ENCODE measurements at regions of chr1 and their contacts with region 1.

Region 1: GRCh38 chr1:169466259-169467230 is 19.2 kb downstream of the SLC19A2 start:
- DNase-seq: no peak
- ATAC-seq: peak in 1 of 2 donors; percentile 33
- H3K4me3 ChIP-seq: no peak overlapping the region
- H3K27ac ChIP-seq: no peak overlapping the region
- H3K4me1 ChIP-seq: no peaks in the 10 kb centered on the region
- H3K27me3 ChIP-seq: no peaks in the 10 kb centered on the region
- CTCF ChIP-seq: peak; percentile 33

Region 2: GRCh38 chr1:169546087-169546995 is 79.8 kb after region 1 on chr1:
- intact Hi-C with region 1: loop called (anchors 10 kb)
- DNase-seq: no peak
- ATAC-seq: peak; percentile 90 to 91
- H3K4me3 ChIP-seq: no peak overlapping the region
- H3K27ac ChIP-seq: no peak overlapping the region
- H3K4me1 ChIP-seq: no peaks in the 10 kb centered on the region
- H3K27me3 ChIP-seq: no peaks in the 10 kb centered on the region
- CTCF ChIP-seq: peak; percentile 79